Activated CD4-positive, alpha-beta T cell treated with anti-CD3 and anti-CD28 coated beads, Interleukin-2, amount 10 ng/mL, durations not matched to agents 24 days and 14 days (primary cell): ENCODE measurements at regions of chr19 and their contacts with region 1.

Region 1: GRCh38 chr19:16897154-16897855 is 8.5 kb downstream of the F2RL3 start:
- DNase-seq: peak; percentile 90
- H3K4me3 Mint-ChIP-seq: peak overlapping the region; percentile 75
- H3K27ac Mint-ChIP-seq: peak overlapping the region; percentile 60
- H3K4me1 Mint-ChIP-seq: peaks cover 22% of the 10 kb centered on the region
- H3K27me3 Mint-ChIP-seq: peaks cover 28% of the 10 kb centered on the region

Region 2: DNA sequence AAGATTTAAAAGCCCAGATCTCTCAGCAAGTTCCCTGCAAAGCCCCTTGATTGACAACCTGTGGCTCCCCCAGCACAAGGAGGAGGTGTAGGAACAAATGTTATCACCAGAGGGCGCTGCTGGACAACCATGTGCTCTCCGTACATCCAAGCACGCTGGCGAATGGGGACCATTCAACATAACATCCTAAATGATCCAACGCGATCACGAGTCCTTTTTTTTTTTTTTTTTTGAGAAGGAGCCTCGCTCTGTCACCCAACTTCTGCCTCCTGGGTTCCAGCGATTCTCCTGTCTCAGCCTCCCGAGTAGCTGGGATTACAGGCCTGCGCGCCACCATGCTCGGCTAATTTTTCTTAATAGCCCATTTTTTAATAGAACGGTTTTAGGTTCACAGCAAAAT is 125.7 kb before region 1 on chr19:
- intact Hi-C with region 1: loop called (anchors 1 kb)
- DNase-seq: peak; percentile 92
- H3K4me3 Mint-ChIP-seq: no peak overlapping the region
- H3K27ac Mint-ChIP-seq: no peak overlapping the region
- H3K4me1 Mint-ChIP-seq: no peaks in the 10 kb centered on the region
- H3K27me3 Mint-ChIP-seq: peaks cover 2% of the 10 kb centered on the region

Region 3: GRCh38 chr19:16829010-16829821 is 68.1 kb before region 1 on chr19 and contains the start of gene SIN3B:
- intact Hi-C with region 1: loop called (anchors 2 kb)
- DNase-seq: peak; percentile 97
- H3K4me3 Mint-ChIP-seq: peak within 1 kb of the TSS; percentile 85
- H3K27ac Mint-ChIP-seq: peak within 1 kb of the TSS; percentile 85
- H3K4me1 Mint-ChIP-seq: peaks cover 17% of the 10 kb centered on the region
- H3K27me3 Mint-ChIP-seq: peaks cover 24% of the 10 kb centered on the region
- total RNA-seq, gene SIN3B: 40.2 and 43.9 TPM in 2 replicates